Activated CD8-positive, alpha-beta T cell treated with anti-CD3 and anti-CD28 coated beads for 36 hours (primary cell): ENCODE measurements at regions of chr13 and their contacts with region 1.

Region 1: GRCh38 chr13:110233181-110233950 is 73.6 kb downstream of the COL4A1 start:
- DNase-seq: no peak
- ATAC-seq: no peak
- H3K4me3 Mint-ChIP-seq: no peak overlapping the region
- H3K27ac Mint-ChIP-seq: no peak overlapping the region
- H3K4me1 Mint-ChIP-seq: no peaks in the 10 kb centered on the region
- H3K27me3 Mint-ChIP-seq: peaks cover 19% of the 10 kb centered on the region
- CTCF ChIP-seq: no peak

Region 2: GRCh38 chr13:110218581-110219201 is 14.7 kb before region 1 on chr13:
- CTCF ChIA-PET with region 1: interaction called, 10 read pairs
- POLR2A ChIA-PET with region 1: no interaction called
- intact Hi-C with region 1: no loop called
- DNase-seq: no peak
- ATAC-seq: no peak
- H3K4me3 Mint-ChIP-seq: no peak overlapping the region
- H3K27ac Mint-ChIP-seq: no peak overlapping the region
- H3K4me1 Mint-ChIP-seq: no peaks in the 10 kb centered on the region
- H3K27me3 Mint-ChIP-seq: peaks cover 10% of the 10 kb centered on the region
- CTCF ChIP-seq: no peak